ENCODE measurements at regions of chr7 and their contacts with region 1.

Region 1: DNA sequence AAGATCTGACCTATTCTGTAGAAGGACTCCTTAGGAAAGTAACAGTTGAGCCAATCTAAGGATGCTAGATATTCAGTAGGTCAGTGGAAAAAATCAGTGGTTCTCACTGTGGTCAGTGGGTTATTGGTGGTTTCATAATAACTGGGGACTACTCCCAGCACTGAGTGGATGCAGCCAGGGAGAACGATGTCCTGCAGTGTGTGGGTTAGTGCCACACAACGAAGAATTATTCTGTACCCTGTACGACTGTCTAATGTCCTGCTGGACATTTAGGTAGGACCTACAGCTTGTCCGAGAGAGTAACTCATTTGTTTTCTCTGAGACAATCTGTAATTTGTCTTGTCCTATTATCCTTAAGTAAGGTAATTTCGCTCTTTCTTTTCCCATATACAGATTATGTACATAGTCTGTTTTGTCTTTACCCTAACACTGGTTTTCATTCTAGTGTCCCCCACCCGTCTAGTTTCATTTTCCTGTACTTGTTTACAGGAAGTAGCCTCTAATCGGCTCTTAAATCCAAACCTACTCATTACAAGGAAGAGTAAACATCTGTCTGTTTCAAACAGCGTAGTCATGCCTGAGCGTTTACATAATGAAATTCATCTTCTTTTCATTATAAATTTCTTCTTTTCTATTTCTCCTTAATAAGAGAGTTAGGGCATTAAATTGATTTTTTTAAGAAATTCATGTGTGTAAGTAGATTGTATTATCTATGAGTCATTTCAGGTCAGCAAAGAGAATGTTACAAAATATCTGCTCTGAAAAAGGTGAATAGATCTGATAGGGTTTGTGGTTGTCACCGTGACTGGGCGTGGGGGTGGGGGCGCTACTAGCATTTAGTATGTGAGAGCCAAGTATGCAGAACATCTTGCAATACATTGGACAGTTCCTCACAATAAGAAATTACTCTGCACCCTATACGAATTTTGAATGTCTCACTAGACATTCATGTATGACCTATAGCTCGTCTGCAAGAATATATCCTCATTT is 8.3 kb upstream of the ZC3HAV1L start:
- DNase-seq: no peak
- H3K4me3 ChIP-seq: no peak overlapping the region
- H3K27ac ChIP-seq: peak overlapping the region; percentile 21 to 40
- H3K4me1 ChIP-seq: no peaks in the 10 kb centered on the region
- H3K27me3 ChIP-seq: no peaks in the 10 kb centered on the region
- CTCF ChIP-seq: no peak
- POLR2A ChIP-seq: no peak

Region 2: GRCh38 chr7:138527746-138528223 is 516.3 kb before region 1 on chr7:
- intact Hi-C with region 1: loop called (anchors 5 kb)
- DNase-seq: no peak
- H3K4me3 ChIP-seq: no peak overlapping the region
- H3K27ac ChIP-seq: no peak overlapping the region
- H3K4me1 ChIP-seq: no peaks in the 10 kb centered on the region
- H3K27me3 ChIP-seq: no peaks in the 10 kb centered on the region
- CTCF ChIP-seq: no peak
- POLR2A ChIP-seq: no peak

Measured in breast epithelium (tissue), 4 donors.